ENCODE measurements at regions of chr19 and their contacts with region 1.

Region 1: GRCh38 chr19:1249298-1249989 is 1.1 kb downstream of the MIDN start:
- DNase-seq: peak; percentile 92
- H3K4me3 Mint-ChIP-seq: peak overlapping the region; percentile 77
- H3K27ac Mint-ChIP-seq: peak overlapping the region; percentile 83
- H3K4me1 Mint-ChIP-seq: peaks cover 12% of the 10 kb centered on the region
- H3K27me3 Mint-ChIP-seq: no peaks in the 10 kb centered on the region

Region 2: DNA sequence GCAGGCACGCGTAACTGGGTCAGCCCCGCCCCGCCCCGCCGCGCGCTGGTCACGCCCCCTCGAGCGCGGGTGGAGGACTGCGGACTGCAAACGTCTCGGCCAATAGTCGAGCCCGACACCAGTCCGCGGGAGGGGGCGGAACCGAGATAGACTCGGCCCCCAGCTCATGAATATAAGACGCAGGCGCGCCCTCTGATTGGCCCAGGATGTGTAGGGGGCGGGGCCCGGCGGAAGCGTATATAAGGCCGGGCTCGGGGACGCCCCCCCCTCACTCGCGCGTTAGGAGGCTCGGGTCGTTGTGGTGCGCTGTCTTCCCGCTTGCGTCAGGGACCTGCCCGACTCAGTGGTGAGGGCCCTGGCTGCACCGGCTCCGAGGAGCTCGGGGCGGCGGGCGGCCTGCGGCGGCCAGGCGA is 19.6 kb after region 1 on chr19 and contains the start of gene CIRBP:
- CTCF ChIA-PET with region 1: interaction called, 299 read pairs
- POLR2A ChIA-PET with region 1: interaction called, 45 read pairs
- DNase-seq: peak; percentile 99
- H3K4me3 Mint-ChIP-seq: peak within 1 kb of the TSS; percentile 88
- H3K27ac Mint-ChIP-seq: peak within 1 kb of the TSS; percentile 90
- H3K4me1 Mint-ChIP-seq: peaks cover 67% of the 10 kb centered on the region
- H3K27me3 Mint-ChIP-seq: peaks cover 2% of the 10 kb centered on the region
- total RNA-seq, gene CIRBP: 169 to 224 TPM

Region 3: DNA sequence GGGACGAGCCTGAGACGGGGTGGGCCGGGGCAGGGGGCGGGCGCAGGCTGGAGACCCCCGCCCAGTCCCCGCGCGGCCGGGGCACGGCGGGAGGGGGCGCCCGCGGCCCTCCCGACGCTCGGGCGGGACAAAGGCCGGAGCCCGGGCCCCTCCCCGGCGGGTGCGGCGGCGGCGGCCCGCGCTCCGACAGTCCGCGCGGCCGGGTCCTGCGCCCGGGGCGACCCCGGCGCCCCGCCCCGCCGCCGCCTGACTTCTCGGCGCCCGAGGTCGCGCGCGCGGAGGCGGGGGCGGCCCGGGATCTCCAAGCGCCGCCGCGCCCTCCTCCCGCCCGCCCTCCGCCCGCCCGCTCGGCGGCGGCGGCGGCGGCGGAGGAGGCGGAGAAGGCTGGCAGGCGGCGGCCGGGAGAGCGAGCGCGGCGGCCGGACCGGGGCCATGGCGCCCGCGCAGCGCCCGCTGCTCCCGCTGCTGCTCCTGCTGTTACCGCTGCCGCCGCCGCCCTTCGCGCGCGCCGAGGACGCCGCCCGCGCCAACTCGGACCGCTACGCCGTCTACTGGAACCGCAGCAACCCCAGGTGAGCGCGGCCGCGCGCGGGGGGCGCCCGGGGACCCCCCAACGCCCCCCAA is 36.4 kb after region 1 on chr19 and contains the start of gene EFNA2:
- CTCF ChIA-PET with region 1: no interaction called
- POLR2A ChIA-PET with region 1: no interaction called
- DNase-seq: no peak
- H3K4me3 Mint-ChIP-seq: peak within 1 kb of the TSS; percentile 49
- H3K27ac Mint-ChIP-seq: no peak within 1 kb of the TSS
- H3K4me1 Mint-ChIP-seq: peaks cover 5% of the 10 kb centered on the region
- H3K27me3 Mint-ChIP-seq: peaks cover 22% of the 10 kb centered on the region
- total RNA-seq, gene EFNA2: not detected

Region 4: DNA sequence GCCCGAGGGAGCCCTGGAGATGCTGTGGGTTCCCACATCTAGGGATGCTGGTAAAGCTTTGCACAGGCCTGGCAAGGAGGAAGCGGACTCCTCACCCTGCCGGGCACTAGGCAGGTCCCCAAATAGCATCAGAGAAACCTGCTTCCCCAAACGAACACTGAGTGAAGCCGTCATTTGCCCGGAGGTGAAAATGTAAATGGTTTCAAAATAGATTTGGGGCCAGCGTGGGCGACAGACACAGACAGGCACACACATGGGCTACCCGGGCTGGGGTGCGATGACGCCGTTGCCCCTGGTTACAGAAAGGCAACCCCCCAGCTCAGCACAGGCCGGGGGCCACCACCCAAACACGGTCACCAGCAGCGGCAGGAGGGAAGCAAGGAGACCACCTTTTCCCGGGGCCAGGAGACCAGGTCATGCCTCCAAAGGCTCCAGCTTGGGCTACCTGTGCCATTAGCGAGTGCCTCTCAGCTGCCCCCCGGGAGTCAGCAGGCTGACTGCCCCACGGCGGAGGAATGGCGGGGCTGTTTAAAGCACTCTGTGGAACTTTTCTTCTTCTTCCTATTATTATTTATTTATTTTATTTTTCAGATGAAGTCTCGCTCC is 86.7 kb after region 1 on chr19:
- CTCF ChIA-PET with region 1: no interaction called
- POLR2A ChIA-PET with region 1: no interaction called
- DNase-seq: no peak
- H3K4me3 Mint-ChIP-seq: no peak overlapping the region
- H3K27ac Mint-ChIP-seq: no peak overlapping the region
- H3K4me1 Mint-ChIP-seq: no peaks in the 10 kb centered on the region
- H3K27me3 Mint-ChIP-seq: no peaks in the 10 kb centered on the region

Measured in activated CD4-positive, alpha-beta T cell treated with anti-CD3 and anti-CD28 coated beads, Interleukin-2, amount 10 ng/mL, durations not matched to agents 7 days and 5 days (primary cell).